ENCODE measurements at regions of chr9 and their contacts with region 1.

Region 1: DNA sequence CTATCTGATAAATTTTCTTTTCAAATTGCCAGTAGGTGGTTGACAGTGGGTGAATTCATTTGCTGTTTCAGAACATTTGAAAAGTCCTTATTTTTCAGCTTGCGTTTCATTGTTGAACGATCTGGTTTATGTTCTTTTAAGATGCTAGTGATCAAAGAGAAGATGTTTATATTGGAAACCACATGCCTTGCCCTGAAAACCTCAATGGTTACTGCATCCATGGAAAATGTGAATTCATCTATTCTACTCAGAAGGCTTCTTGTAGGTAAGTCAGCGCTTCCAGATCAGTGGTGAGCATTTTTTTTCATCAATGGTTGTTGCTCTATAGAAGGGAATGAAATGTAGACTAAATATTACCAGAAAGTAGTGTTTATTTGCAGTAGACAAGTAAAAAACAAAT is 16.6 kb upstream of the CAVIN4 start:
- DNase-seq: no peak
- ATAC-seq: no peak
- H3K4me3 ChIP-seq: no peak overlapping the region
- H3K27ac ChIP-seq: no peak overlapping the region
- H3K4me1 ChIP-seq: no peaks in the 10 kb centered on the region
- H3K27me3 ChIP-seq: no peaks in the 10 kb centered on the region
- CTCF ChIP-seq: no peak
- POLR2A ChIP-seq: no peak

Region 2: GRCh38 chr9:100111235-100111634 is 450.0 kb before region 1 on chr9:
- intact Hi-C with region 1: no loop called
- DNase-seq: peak; percentile 79 to 93 (median 82)
- ATAC-seq: peak; percentile 97 to 99 (median 98)
- H3K4me3 ChIP-seq: peak overlapping the region in 2 of 12 donors; percentile 11 to 15
- H3K27ac ChIP-seq: peak overlapping the region in 10 of 12 donors; percentile 32 to 65 (median 44)
- H3K4me1 ChIP-seq: peaks cover 0 to 22% (median 11%) of the 10 kb centered on the region in 12 donors
- H3K27me3 ChIP-seq: no peaks in the 10 kb centered on the region
- CTCF ChIP-seq: no peak
- POLR2A ChIP-seq: no peak

Region 3: DNA sequence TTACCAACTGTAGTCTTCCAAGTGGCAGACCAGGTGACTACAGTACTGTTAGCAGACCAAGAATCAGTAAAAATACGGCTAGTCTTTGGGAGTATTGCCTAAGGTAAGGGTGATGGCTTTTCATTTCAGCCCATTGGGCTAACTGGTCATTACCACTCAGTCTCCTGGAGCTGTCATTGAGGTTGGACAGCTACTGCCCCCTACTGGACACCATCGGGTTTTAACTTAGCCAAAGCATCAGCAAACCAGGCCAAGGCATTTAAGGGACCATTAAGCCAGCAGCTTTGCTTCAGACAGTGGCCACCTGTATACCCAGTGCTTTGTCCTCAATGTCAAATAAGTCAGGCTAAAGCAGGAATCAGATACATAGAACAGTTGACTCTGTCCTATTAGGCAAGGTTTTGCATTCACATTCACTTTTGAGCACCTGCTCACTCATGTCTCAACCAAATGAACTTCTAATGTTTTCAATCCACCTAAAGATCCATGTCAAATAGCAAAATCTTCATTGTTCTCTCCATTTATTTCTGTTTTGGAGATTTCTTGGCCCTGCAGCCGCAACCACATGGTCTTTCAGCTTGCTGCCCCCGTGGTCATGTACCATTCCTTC is 345.0 kb before region 1 on chr9:
- intact Hi-C with region 1: no loop called
- DNase-seq: peak in 4 of 5 donors; percentile 27 to 50 (median 36)
- ATAC-seq: peak in 3 of 4 donors; percentile 55 to 62 (median 61)
- H3K4me3 ChIP-seq: no peak overlapping the region
- H3K27ac ChIP-seq: no peak overlapping the region
- H3K4me1 ChIP-seq: peaks cover 0 to 7% (median 0%) of the 10 kb centered on the region in 12 donors
- H3K27me3 ChIP-seq: no peaks in the 10 kb centered on the region
- CTCF ChIP-seq: peak; percentile 42 to 70 (median 63)
- POLR2A ChIP-seq: no peak

Region 4: DNA sequence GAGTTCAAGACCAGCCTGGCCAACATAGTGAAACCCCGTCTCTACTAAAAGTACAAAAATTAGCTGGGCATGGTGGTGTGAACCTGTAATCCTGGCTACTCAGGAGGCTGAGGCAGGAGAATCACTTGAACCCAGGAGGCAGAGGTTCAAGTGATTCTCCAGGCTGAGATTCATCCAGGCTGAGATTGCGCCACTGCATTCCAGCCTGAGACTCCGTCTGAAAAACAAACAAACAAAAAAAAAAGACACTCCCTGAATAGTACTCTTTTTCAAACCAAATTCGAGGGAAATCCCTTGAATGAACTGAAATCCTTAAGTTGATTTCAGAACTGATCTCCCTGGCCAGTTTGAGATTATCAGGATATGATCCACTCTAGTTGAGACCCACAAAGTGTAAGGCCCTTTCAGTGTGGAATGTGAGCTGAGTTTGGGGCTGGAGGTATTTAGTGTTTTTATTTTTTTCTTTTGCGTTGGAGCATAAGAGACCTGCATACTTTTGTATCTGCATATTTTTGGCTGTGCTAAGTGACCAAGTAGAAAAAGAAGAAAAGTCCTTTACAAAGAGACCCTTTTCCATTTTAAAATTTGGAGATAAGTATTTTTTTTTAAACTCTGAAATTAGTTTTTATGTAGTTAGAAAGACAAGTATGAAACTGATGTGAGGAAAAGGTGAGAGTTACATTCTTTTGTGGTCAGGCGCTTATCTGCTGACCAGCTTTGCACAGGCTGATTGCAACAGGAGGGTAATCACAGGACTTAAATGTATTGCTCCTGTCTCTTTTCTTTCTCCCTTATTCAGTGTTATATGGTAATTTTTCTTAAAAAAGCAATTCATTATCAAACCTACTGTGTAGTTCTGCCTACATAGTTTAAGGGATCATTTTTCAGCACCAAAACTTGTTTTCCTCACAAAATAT is 45.4 kb before region 1 on chr9:
- intact Hi-C with region 1: loop called in 1 of 10 experiments (anchors 10 kb)
- DNase-seq: no peak
- ATAC-seq: no peak
- H3K4me3 ChIP-seq: no peak overlapping the region
- H3K27ac ChIP-seq: no peak overlapping the region
- H3K4me1 ChIP-seq: no peaks in the 10 kb centered on the region
- H3K27me3 ChIP-seq: no peaks in the 10 kb centered on the region
- CTCF ChIP-seq: no peak
- POLR2A ChIP-seq: no peak

Measured in heart left ventricle (tissue), 16 donors.